Body of pancreas (tissue), 4 donors: ENCODE measurements at regions of chr12 and their contacts with region 1.

Region 1: GRCh38 chr12:47844274-47845019 is 24.7 kb upstream of the HDAC7 start:
- DNase-seq: no peak
- ATAC-seq: no peak
- H3K4me3 ChIP-seq: no peak overlapping the region
- H3K27ac ChIP-seq: no peak overlapping the region
- H3K4me1 ChIP-seq: no peaks in the 10 kb centered on the region
- H3K27me3 ChIP-seq: no peaks in the 10 kb centered on the region
- CTCF ChIP-seq: no peak
- POLR2A ChIP-seq: no peak

Region 2: GRCh38 chr12:47797441-47797840 is 47.0 kb before region 1 on chr12:
- intact Hi-C with region 1: loop called (anchors 5 kb)
- DNase-seq: no peak
- ATAC-seq: no peak
- H3K4me3 ChIP-seq: no peak overlapping the region
- H3K27ac ChIP-seq: no peak overlapping the region
- H3K4me1 ChIP-seq: peaks cover 32% of the 10 kb centered on the region
- H3K27me3 ChIP-seq: no peaks in the 10 kb centered on the region
- CTCF ChIP-seq: peak in 3 of 7 experiments; percentile 23 to 35 (median 26)
- POLR2A ChIP-seq: no peak

Region 3: GRCh38 chr12:47882781-47883546 is 38.5 kb after region 1 on chr12:
- intact Hi-C with region 1: no loop called
- DNase-seq: peak in 1 of 4 donors; percentile 31
- ATAC-seq: no peak
- H3K4me3 ChIP-seq: no peak overlapping the region
- H3K27ac ChIP-seq: no peak overlapping the region
- H3K4me1 ChIP-seq: no peaks in the 10 kb centered on the region
- H3K27me3 ChIP-seq: no peaks in the 10 kb centered on the region
- CTCF ChIP-seq: no peak
- POLR2A ChIP-seq: no peak

Region 4: DNA sequence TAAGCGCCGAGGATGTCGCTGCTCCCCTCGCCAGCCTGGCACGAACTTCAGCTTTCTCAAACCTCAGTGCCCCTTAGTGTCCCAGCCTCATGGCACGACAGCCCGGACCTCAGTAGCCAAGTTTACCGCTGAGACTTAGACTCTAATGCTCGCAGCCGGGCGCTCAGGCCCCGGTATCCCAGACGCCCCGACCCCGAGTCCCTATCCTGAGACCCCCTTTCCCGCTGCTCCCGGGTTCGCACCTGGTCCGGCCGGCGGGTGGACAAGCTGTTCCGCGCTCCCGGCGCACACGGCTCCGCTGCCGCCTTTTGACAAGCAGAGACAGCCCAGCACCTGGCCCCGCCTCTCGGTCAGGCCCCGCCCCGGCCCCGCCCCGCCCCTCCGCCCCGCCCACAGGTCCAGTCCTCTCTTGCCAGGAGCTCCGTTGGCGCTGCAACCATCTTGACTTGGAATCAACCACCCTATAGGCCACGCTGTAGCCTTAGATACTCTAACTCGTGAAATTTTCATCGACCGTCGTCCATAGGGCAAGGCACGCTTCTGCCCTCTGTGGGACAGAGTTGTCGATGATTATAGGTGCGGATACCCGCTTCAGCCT is 60.4 kb after region 1 on chr12 and contains the start of gene VDR:
- intact Hi-C with region 1: no loop called
- DNase-seq: peak; percentile 85 to 91 (median 90)
- ATAC-seq: peak; percentile 91
- H3K4me3 ChIP-seq: peak within 1 kb of the TSS; percentile 15 to 29
- H3K27ac ChIP-seq: peak within 1 kb of the TSS; percentile 53 to 94 (median 86)
- H3K4me1 ChIP-seq: peaks cover 33% of the 10 kb centered on the region
- H3K27me3 ChIP-seq: no peaks in the 10 kb centered on the region
- CTCF ChIP-seq: peak in 3 of 7 experiments; percentile 25 to 33 (median 27)
- POLR2A ChIP-seq: peak; percentile 68 to 80 (median 79)
- total RNA-seq, gene VDR: 1.3 to 3.1 TPM